ENCODE measurements at regions of chrX and their contacts with region 1.

Region 1: GRCh38 chrX:31036895-31037294 is 34.9 kb downstream of the FTHL17 start:
- DNase-seq: peak; percentile 46 to 72 (median 62)
- ATAC-seq: peak; percentile 73
- H3K4me3 ChIP-seq: no peak overlapping the region
- H3K27ac ChIP-seq: no peak overlapping the region
- H3K4me1 ChIP-seq: no peaks in the 10 kb centered on the region
- H3K27me3 ChIP-seq: no peaks in the 10 kb centered on the region
- CTCF ChIP-seq: peak; percentile 23 to 67 (median 55)
- POLR2A ChIP-seq: no peak

Region 2: DNA sequence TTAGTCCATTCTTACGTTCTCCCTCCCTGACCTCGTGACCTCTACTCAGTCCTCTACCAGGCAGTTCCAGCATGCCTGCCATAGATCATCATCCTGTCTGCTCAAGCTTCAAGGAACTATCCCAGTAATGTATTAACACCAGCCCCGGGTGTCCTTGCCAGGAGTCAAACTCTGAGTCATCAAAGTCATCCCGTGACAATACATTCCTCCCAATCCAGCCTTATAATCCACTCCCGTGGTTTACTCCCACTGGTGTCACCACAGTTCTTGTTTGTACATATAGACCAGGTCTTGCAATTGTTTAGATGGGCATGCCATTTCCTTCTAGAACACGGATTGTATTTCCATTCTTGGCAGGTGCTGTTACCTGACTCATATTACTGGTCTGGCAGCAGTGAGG is 79.1 kb before region 1 on chrX:
- intact Hi-C with region 1: no loop called
- DNase-seq: peak in 2 of 4 donors; percentile 5 to 21
- ATAC-seq: no peak
- H3K4me3 ChIP-seq: no peak overlapping the region
- H3K27ac ChIP-seq: no peak overlapping the region
- H3K4me1 ChIP-seq: no peaks in the 10 kb centered on the region
- H3K27me3 ChIP-seq: no peaks in the 10 kb centered on the region
- CTCF ChIP-seq: no peak
- POLR2A ChIP-seq: no peak

Region 3: GRCh38 chrX:31293409-31293808 is 256.5 kb after region 1 on chrX:
- intact Hi-C with region 1: loop called (anchors 5 kb)
- DNase-seq: peak in 3 of 4 donors; percentile 12 to 25 (median 23)
- ATAC-seq: no peak
- H3K4me3 ChIP-seq: no peak overlapping the region
- H3K27ac ChIP-seq: no peak overlapping the region
- H3K4me1 ChIP-seq: no peaks in the 10 kb centered on the region
- H3K27me3 ChIP-seq: no peaks in the 10 kb centered on the region
- CTCF ChIP-seq: peak in 6 of 7 experiments; percentile 25 to 73 (median 63)
- POLR2A ChIP-seq: no peak

Measured in body of pancreas (tissue), 4 donors.